ENCODE measurements at regions of chr10 and their contacts with region 1.

Region 1: GRCh38 chr10:73879296-73880173 is 5.2 kb upstream of the CAMK2G start:
- DNase-seq: no peak
- H3K4me3 ChIP-seq: no peak overlapping the region
- H3K27me3 ChIP-seq: no peaks in the 10 kb centered on the region
- CTCF ChIP-seq: peak; percentile 93

Region 2: DNA sequence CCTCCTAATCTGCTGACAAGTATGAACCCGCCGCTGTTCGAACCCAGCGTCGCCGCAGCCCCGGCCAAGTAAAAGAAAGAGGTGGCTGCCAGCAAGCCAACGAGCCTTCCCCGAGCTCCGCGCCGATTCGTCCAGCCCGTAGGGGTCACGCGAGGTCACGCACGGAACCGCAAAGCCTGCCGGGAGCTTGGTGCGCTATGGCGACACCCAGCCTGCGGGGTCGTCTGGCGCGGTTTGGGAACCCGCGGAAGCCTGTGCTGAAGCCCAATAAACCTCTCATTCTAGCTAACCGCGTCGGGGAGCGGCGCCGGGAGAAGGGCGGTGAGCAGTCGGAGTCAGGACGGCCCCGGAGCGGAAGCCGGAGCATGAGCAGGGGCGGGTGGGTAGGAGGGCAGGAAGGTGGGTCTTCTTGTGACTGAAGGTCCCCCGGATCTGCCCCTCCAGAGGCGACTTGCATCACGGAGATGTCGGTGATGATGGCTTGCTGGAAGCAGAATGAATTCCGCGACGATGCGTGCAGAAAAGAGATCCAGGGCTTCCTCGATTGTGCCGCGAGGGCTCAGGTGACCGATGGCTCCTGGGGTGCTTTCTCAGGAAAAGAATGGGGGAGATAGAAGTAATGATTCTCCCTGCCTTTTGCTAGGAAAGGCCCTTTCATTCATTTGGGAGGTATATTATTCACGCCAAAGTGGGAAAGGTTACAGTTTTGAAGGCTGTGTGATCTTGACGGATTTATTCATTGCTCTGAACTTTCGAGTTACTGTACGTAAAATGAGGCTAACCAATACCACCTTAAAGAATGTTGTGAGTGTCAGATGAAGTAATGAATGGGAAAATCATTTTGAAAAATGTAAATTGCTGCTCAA is 97.4 kb before region 1 on chr10 and contains the start of gene CHCHD1:
- CTCF ChIA-PET with region 1: interaction called, 13 read pairs
- POLR2A ChIA-PET with region 1: no interaction called
- DNase-seq: no peak
- H3K4me3 ChIP-seq: peak within 1 kb of the TSS; percentile 99
- H3K27me3 ChIP-seq: no peaks in the 10 kb centered on the region
- CTCF ChIP-seq: no peak
- polyA plus RNA-seq, gene CHCHD1: 14.3 and 35.4 TPM in 2 replicates

Region 3: GRCh38 chr10:73843271-73843670 is 36.3 kb before region 1 on chr10:
- CTCF ChIA-PET with region 1: interaction called, 337 read pairs
- POLR2A ChIA-PET with region 1: no interaction called
- DNase-seq: no peak
- H3K4me3 ChIP-seq: no peak overlapping the region
- H3K27me3 ChIP-seq: no peaks in the 10 kb centered on the region
- CTCF ChIP-seq: no peak

Region 4: DNA sequence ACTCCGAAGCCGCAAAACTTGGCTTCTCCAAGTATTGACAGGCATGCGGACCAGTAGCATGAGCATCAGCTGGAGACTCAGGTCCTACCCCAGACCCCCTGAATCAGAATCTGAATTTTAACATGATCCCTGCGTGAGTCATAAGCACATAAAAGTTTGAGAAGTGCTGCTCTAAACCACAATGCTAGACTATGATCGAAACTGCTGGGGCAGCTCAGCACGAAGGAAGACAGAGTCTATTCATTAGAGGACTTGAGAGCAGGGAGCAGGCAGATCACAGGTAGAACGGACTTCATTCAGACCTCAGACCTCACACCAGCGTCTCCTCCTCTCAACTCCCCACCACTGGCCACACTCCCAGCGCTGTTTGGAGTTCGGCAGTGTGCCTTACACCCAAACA is 22.1 kb before region 1 on chr10:
- CTCF ChIA-PET with region 1: interaction called, 337 read pairs
- POLR2A ChIA-PET with region 1: no interaction called
- DNase-seq: peak; percentile 58
- H3K4me3 ChIP-seq: no peak overlapping the region
- H3K27me3 ChIP-seq: no peaks in the 10 kb centered on the region
- CTCF ChIP-seq: no peak

Region 5: GRCh38 chr10:73891540-73891939 is 12.0 kb after region 1 on chr10:
- CTCF ChIA-PET with region 1: interaction called, 28 read pairs
- POLR2A ChIA-PET with region 1: no interaction called
- DNase-seq: no peak
- H3K4me3 ChIP-seq: no peak overlapping the region
- H3K27me3 ChIP-seq: no peaks in the 10 kb centered on the region
- CTCF ChIP-seq: no peak

Measured in BJ (cell line).